Esophagus muscularis mucosa (tissue), 4 donors: ENCODE measurements at regions of chr10 and their contacts with region 1.

Region 1: GRCh38 chr10:73096449-73097304 is at the start of gene P4HA1:
- DNase-seq: peak; percentile 100
- H3K4me3 ChIP-seq: peak within 1 kb of the TSS; percentile 68 to 96 (median 76)
- H3K27ac ChIP-seq: peak within 1 kb of the TSS; percentile 94 to 99 (median 94)
- H3K4me1 ChIP-seq: peaks cover 24 to 32% (median 30%) of the 10 kb centered on the region in 4 donors
- H3K27me3 ChIP-seq: no peaks in the 10 kb centered on the region
- CTCF ChIP-seq: peak; percentile 62 to 75 (median 74)
- EP300 ChIP-seq: no peak
- POLR2A ChIP-seq: peak; percentile 95
- total RNA-seq, gene P4HA1: 16.7 to 25.0 (median 19.2) TPM

Region 2: GRCh38 chr10:73110345-73110849 is 13.7 kb after region 1 on chr10 and contains the start of gene NUDT13:
- intact Hi-C with region 1: loop called (anchors 2 kb)
- DNase-seq: peak; percentile 92
- H3K4me3 ChIP-seq: peak within 1 kb of the TSS; percentile 52 to 69 (median 58)
- H3K27ac ChIP-seq: peak within 1 kb of the TSS; percentile 83 to 86 (median 84)
- H3K4me1 ChIP-seq: peaks cover 0 to 8% (median 6%) of the 10 kb centered on the region in 4 donors
- H3K27me3 ChIP-seq: no peaks in the 10 kb centered on the region
- CTCF ChIP-seq: no peak
- EP300 ChIP-seq: no peak
- POLR2A ChIP-seq: no peak
- total RNA-seq, gene NUDT13: 1.3 to 3.4 (median 2.5) TPM

Region 3: GRCh38 chr10:73159038-73159648 is 62.5 kb after region 1 on chr10:
- intact Hi-C with region 1: loop called (anchors 1 kb)
- DNase-seq: no peak
- H3K4me3 ChIP-seq: no peak overlapping the region
- H3K27ac ChIP-seq: no peak overlapping the region
- H3K4me1 ChIP-seq: peaks cover 17 to 34% (median 26%) of the 10 kb centered on the region in 4 donors
- H3K27me3 ChIP-seq: no peaks in the 10 kb centered on the region
- CTCF ChIP-seq: peak; percentile 73 to 78 (median 76)
- EP300 ChIP-seq: no peak
- POLR2A ChIP-seq: no peak